PC-3 (cell line): ENCODE measurements at regions of chr3 and their contacts with region 1.

Region 1: DNA sequence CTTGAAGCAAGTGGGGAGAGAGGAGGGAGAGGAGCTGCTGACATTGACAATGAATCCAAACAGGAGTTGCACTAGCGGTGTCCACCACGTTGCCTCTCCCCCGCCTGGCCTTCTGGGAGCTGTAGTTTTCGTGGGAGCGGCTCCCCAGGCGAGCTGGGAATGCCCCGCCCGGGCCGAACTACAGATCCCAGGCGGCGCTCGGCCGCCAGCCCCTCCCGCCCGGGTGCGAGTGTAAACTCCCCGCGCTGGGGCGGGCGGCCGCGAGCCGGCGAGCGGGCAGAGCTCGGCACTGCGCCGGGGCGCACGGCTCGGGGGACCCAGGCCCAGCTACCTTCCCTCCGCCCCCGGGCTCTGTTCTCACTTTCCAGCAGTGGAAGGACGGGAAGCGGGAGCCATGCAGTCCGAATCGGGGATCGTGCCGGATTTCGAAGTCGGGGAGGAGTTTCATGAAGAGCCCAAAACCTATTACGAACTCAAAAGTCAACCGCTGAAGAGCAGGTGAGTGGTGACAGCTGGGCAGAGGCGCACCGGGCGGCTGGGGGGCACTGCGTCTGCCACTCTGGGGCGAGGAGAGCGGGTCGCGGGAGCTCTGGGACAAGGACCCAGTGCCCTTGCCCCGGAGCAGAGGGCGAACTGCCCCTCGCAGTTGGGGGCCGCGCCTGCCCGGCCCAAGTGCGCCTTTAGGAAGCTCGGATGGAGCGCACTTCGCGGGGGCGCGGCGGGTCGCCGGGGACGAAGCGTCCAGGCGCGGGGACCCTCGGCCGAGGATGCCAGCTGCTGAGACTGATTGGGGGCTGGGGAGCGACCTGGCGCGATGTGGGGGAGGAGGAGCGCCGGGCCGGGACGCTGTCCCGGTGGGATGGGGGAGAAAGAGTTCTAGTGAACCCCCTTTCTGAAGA is at the start of gene MITF:
- DNase-seq: peak; percentile 80
- ATAC-seq: peak; percentile 97
- H3K4me3 ChIP-seq: peak within 1 kb of the TSS; percentile 80
- H3K27ac ChIP-seq: no peak within 1 kb of the TSS
- H3K4me1 ChIP-seq: no peaks in the 10 kb centered on the region
- H3K27me3 ChIP-seq: no peaks in the 10 kb centered on the region
- CTCF ChIP-seq: no peak
- total RNA-seq, gene MITF: 2.8 and 7.6 TPM in 2 replicates

Region 2: DNA sequence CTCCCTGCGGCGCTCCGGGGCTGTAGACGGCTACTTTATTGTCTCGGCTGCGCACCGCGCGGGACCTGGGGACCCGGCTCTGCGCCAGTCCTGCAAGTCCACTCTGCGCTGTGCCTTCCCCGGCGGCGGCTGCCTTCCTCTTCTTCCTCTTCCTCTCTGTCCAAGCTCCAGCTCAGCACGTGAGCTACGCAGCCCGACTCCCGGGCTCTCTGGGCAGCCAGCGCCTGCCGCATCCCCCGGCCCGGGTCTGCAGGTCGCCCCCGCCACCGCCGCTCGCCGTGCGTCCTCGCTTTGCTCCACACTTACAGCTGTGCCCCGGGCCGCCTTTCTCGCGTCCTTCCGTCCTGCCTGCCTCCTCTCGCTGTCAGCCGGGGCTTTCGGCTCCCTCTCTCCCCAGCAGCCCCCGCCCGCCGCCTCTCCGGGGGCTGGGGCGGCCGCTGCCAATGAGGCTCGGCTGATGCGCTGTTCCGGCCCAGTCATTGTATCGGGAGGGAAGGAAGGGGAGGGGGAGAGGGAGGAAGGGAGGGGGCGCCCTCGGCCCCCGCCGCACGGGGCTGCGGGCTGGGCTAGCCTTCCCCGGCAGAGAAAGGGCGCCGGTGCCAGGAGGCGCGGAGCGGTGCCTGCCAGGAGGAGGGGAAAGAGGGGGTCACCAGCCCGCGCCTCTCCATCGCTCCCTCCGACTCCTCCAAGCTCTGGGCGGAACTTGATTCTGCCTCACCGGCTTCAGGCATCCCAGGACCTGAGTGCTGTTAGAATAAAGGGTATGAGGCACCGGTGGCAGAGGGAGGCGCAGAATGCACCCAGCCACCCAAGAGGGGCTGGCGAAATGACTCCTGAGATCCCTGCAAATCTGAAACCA is 197.0 kb before region 1 on chr3:
- CTCF ChIA-PET with region 1: no interaction called
- POLR2A ChIA-PET with region 1: no interaction called
- intact Hi-C with region 1: no loop called
- DNase-seq: no peak
- ATAC-seq: peak; percentile 18; the same call in 1 of the 2 replicates
- H3K4me3 ChIP-seq: peak overlapping the region; percentile 32; the same call in 1 of the 2 replicates
- H3K27ac ChIP-seq: no peak overlapping the region
- H3K4me1 ChIP-seq: no peaks in the 10 kb centered on the region
- H3K27me3 ChIP-seq: peaks cover 19% of the 10 kb centered on the region
- CTCF ChIP-seq: no peak

Region 3: DNA sequence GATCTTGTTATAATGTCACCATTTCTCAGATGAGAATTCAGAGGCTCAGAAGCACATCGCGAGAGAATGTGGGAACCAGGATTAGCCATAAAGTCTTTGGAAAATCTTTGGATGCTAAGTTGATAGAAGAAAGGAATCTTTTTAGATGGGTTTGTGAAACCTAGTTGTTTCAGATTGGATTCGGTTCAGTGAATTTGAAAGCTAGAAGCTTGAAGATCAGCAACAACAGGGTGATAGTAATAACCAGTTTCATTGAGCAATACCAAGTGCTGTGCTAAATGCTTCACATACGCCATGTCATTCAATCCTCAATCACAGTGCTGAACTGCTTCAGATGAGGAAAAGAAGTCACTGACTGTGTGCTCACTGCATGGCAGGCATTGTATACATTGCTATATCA is 47.6 kb before region 1 on chr3:
- CTCF ChIA-PET with region 1: interaction called, 4 read pairs
- POLR2A ChIA-PET with region 1: interaction called, 3 read pairs
- intact Hi-C with region 1: loop called (anchors 1 kb)
- DNase-seq: no peak
- ATAC-seq: no peak
- H3K4me3 ChIP-seq: no peak overlapping the region
- H3K27ac ChIP-seq: no peak overlapping the region
- H3K4me1 ChIP-seq: peaks cover 11% of the 10 kb centered on the region
- H3K27me3 ChIP-seq: no peaks in the 10 kb centered on the region
- CTCF ChIP-seq: no peak

Region 4: GRCh38 chr3:69761896-69762767 is 22.7 kb after region 1 on chr3:
- CTCF ChIA-PET with region 1: no interaction called
- POLR2A ChIA-PET with region 1: no interaction called
- intact Hi-C with region 1: loop called (anchors 2 kb)
- DNase-seq: peak; percentile 81
- ATAC-seq: peak; percentile 90
- H3K4me3 ChIP-seq: peak overlapping the region; percentile 33
- H3K27ac ChIP-seq: peak overlapping the region; percentile 85
- H3K4me1 ChIP-seq: peaks cover 52% of the 10 kb centered on the region
- H3K27me3 ChIP-seq: no peaks in the 10 kb centered on the region
- CTCF ChIP-seq: no peak

Region 5: GRCh38 chr3:69770219-69770618 is 30.8 kb after region 1 on chr3:
- CTCF ChIA-PET with region 1: no interaction called
- POLR2A ChIA-PET with region 1: no interaction called
- intact Hi-C with region 1: loop called (anchors 2 kb)
- DNase-seq: peak; percentile 85
- ATAC-seq: peak; percentile 76
- H3K4me3 ChIP-seq: peak overlapping the region; percentile 48
- H3K27ac ChIP-seq: peak overlapping the region; percentile 87
- H3K4me1 ChIP-seq: peaks cover 55% of the 10 kb centered on the region
- H3K27me3 ChIP-seq: no peaks in the 10 kb centered on the region
- CTCF ChIP-seq: no peak

Region 6: GRCh38 chr3:69791919-69792399 is 52.5 kb after region 1 on chr3:
- CTCF ChIA-PET with region 1: no interaction called
- POLR2A ChIA-PET with region 1: interaction called, 4 read pairs
- intact Hi-C with region 1: loop called (anchors 2 kb)
- DNase-seq: peak; percentile 39
- ATAC-seq: peak; percentile 64
- H3K4me3 ChIP-seq: no peak overlapping the region
- H3K27ac ChIP-seq: no peak overlapping the region
- H3K4me1 ChIP-seq: peaks cover 9% of the 10 kb centered on the region
- H3K27me3 ChIP-seq: no peaks in the 10 kb centered on the region
- CTCF ChIP-seq: peak; percentile 54